Heart left ventricle (tissue), 16 donors: ENCODE measurements at regions of chr1 and their contacts with region 1.

Region 1: GRCh38 chr1:83998498-83999315 is at the start of gene TTLL7:
- DNase-seq: peak; percentile 74 to 88 (median 80)
- ATAC-seq: peak; percentile 72 to 96 (median 93)
- H3K4me3 ChIP-seq: peak within 1 kb of the TSS; percentile 64 to 91 (median 78)
- H3K27ac ChIP-seq: peak within 1 kb of the TSS; percentile 41 to 86 (median 72)
- H3K4me1 ChIP-seq: peaks cover 0 to 24% (median 2%) of the 10 kb centered on the region in 12 donors
- H3K27me3 ChIP-seq: peaks cover 0 to 34% (median 0%) of the 10 kb centered on the region in 9 donors
- CTCF ChIP-seq: peak in 1 of 12 donors; percentile 11
- POLR2A ChIP-seq: no peak
- total RNA-seq, gene TTLL7: 1.6 to 12.8 (median 3.3) TPM

Region 2: DNA sequence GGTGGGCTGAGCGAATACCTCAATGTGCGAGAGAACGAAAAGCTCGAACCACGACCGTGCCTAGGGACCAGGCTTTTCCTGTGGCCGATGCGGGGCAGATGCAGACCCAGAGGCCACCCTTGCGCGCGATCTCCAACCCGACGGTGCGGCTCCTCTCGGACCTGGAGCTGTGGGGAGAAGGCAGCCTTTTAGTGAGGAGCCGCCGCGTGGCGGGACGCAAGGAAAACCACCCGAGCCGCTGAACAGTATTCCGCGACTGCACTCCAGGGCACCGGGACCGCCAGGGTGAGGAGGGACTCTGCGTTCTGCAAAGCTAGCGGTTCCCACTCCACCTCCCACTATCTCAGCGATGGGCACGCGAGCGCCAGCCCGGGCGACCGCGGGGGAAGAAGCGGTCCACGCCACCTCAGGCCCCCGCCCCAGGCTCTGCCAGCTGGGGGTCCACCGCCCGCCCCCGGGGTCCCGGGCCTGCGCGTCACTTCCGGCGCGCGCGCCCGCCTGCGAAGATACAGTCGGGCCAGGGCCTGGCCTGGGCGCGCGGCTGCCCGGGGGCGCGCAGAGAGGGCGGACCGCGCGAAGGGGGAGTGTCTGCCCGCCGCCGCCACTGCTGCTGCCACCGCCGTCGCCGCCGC is 78.9 kb after region 1 on chr1:
- intact Hi-C with region 1: loop called in 1 of 10 experiments (anchors 5 kb)
- DNase-seq: peak; percentile 75 to 87 (median 78)
- ATAC-seq: peak; percentile 91 to 99 (median 97)
- H3K4me3 ChIP-seq: peak overlapping the region; percentile 73 to 96 (median 86)
- H3K27ac ChIP-seq: peak overlapping the region; percentile 9 to 95 (median 88)
- H3K4me1 ChIP-seq: peaks cover 0 to 17% (median 9%) of the 10 kb centered on the region in 12 donors
- H3K27me3 ChIP-seq: no peaks in the 10 kb centered on the region
- CTCF ChIP-seq: peak in 3 of 12 donors; percentile 6 to 23 (median 11)
- POLR2A ChIP-seq: no peak

Region 3: DNA sequence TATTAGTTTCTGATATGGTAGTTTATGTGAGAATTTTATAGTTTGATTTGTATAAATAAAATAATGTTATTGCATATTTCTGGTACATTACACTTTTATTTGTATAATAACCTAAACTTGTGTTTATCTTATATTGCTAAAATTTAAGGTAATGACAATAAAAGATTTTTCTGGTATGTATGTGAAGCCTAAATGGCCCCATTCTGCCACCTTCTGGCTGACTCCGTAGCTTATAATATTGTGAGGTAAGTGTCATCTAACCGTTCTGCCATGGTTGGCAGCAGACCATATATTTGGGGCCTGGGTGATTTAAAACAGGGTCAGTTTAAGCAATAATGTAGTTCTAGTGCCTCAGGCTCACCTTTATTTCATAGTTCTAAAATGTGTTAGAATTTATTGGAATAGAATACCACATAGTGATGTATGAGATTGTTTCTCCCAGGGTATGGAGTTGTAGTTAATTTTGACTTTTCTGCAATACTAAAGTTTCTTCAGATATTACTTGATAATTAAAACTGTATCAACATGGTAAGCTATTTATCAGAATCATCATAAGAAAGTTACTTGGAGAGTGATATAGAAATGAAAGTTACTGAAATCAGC is 124.2 kb after region 1 on chr1:
- intact Hi-C with region 1: loop called in 2 of 10 experiments (anchors 10 kb)
- DNase-seq: peak in 4 of 5 donors; percentile 15 to 32 (median 31)
- ATAC-seq: peak; percentile 45 to 78 (median 48)
- H3K4me3 ChIP-seq: no peak overlapping the region
- H3K27ac ChIP-seq: no peak overlapping the region
- H3K4me1 ChIP-seq: peaks cover 0 to 21% (median 0%) of the 10 kb centered on the region in 12 donors
- H3K27me3 ChIP-seq: no peaks in the 10 kb centered on the region
- CTCF ChIP-seq: peak; percentile 34 to 74 (median 61)
- POLR2A ChIP-seq: no peak